ENCODE measurements at regions of chr1 and their contacts with region 1.

Region 1: GRCh38 chr1:40143891-40144575 is 17.2 kb upstream of the RLF start:
- DNase-seq: peak; percentile 53
- H3K4me3 ChIP-seq: no peak overlapping the region
- H3K27ac ChIP-seq: no peak overlapping the region
- H3K4me1 ChIP-seq: no peaks in the 10 kb centered on the region
- H3K27me3 ChIP-seq: peaks cover 41% of the 10 kb centered on the region
- CTCF ChIP-seq: peak; percentile 61 to 77 (median 72)
- EP300 ChIP-seq: no peak
- POLR2A ChIP-seq: no peak

Region 2: DNA sequence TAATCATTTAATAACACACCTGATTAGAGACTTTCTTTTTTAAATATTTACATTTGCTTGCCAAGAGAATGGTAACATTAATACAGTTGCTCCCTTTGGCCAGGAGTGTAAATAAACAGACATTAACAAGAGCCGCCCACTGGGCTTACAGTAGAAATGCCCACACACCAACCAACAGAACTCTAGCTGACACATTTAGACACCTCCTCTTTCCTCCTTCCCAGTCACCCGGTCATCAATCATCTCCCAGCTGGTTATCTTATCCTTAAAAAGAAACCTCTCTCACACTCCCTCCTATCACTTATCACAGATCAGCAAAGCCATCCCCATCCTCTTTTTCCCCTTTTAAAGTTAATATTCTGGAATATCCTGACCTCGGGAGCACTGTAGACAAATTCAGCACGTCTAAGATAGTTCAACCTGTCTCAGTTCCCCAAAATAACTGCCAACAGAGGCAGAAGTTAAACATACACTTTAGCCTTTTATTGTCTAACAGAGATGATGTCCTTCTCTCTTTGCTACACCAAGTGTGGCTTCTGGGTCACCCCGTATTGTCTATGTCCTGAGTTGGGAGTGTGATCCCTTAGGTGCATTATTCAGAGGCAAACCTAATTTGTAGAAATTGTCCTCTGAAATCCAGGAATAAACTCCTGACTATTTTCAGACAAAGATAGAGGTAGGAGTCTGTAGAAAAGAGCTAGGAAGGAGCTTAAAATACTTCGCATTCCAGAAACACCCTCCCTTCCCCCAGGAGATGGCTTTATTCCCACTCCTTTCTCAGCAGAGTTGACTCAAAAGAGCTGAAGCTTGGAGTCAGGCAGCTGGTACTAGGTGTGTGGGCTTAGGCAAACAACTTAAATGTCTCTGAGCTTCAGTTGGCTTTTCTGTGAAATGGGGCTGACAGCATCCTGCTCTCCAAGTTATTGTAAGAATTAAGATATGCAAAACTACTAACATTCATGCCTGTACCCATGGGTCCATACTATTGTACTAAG is 251.1 kb before region 1 on chr1:
- in situ Hi-C with region 1: no loop called
- intact Hi-C with region 1: no loop called
- DNase-seq: no peak
- H3K4me3 ChIP-seq: no peak overlapping the region
- H3K27ac ChIP-seq: no peak overlapping the region
- H3K4me1 ChIP-seq: peaks cover 0 to 12% (median 3%) of the 10 kb centered on the region in 4 donors
- H3K27me3 ChIP-seq: no peaks in the 10 kb centered on the region
- CTCF ChIP-seq: no peak
- EP300 ChIP-seq: no peak
- POLR2A ChIP-seq: no peak

Region 3: DNA sequence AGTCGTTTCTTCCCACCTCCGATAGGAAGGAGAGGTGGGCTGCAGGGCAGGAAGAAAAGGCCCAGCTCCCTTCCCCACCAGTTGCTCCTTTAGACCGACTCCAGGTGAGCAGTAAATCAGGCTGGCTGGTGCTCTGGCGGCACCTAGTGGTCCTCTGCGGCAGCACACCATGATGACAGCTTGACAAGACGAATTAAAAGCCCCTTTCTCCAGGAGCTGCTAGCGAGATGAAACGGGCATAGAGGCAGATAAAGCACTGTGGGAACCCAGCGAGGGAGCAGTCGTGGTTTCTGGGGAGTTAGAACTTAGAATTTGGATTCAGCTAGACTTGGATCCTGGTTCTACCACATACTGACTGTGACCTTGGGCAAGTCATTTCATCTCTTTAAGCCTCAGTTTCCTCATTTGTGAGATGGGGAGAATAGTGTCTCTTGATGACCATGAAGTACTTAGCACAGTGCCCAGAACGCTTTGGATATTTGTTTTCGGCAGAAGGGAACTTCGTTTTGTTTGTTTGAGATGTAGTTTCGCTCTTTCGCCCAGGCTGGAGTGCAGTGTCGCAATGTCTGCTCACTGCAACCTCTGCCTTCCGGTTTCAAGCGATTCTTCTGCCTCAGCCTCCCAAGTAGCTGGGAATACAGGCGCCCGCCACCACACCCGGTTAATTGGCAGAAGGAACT is 194.9 kb after region 1 on chr1:
- in situ Hi-C with region 1: loop called in 3 of 4 experiments (anchors 10 kb)
- intact Hi-C with region 1: loop called (anchors 5 kb)
- DNase-seq: peak; percentile 89
- H3K4me3 ChIP-seq: peak overlapping the region in 1 of 4 donors; percentile 30
- H3K27ac ChIP-seq: no peak overlapping the region
- H3K4me1 ChIP-seq: peaks cover 0 to 8% (median 3%) of the 10 kb centered on the region in 4 donors
- H3K27me3 ChIP-seq: no peaks in the 10 kb centered on the region
- CTCF ChIP-seq: peak; percentile 96 to 99 (median 98)
- EP300 ChIP-seq: no peak
- POLR2A ChIP-seq: no peak

Region 4: GRCh38 chr1:40404670-40405462 is 260.8 kb after region 1 on chr1:
- in situ Hi-C with region 1: loop called in 2 of 4 experiments (anchors 10 to 25 kb)
- intact Hi-C with region 1: loop called (anchors 2 kb)
- DNase-seq: no peak
- H3K4me3 ChIP-seq: no peak overlapping the region
- H3K27ac ChIP-seq: peak overlapping the region in 3 of 4 donors; percentile 10 to 39 (median 11)
- H3K4me1 ChIP-seq: peaks cover 0 to 22% (median 0%) of the 10 kb centered on the region in 4 donors
- H3K27me3 ChIP-seq: no peaks in the 10 kb centered on the region
- CTCF ChIP-seq: peak; percentile 78 to 88 (median 88)
- EP300 ChIP-seq: no peak
- POLR2A ChIP-seq: no peak

Region 5: DNA sequence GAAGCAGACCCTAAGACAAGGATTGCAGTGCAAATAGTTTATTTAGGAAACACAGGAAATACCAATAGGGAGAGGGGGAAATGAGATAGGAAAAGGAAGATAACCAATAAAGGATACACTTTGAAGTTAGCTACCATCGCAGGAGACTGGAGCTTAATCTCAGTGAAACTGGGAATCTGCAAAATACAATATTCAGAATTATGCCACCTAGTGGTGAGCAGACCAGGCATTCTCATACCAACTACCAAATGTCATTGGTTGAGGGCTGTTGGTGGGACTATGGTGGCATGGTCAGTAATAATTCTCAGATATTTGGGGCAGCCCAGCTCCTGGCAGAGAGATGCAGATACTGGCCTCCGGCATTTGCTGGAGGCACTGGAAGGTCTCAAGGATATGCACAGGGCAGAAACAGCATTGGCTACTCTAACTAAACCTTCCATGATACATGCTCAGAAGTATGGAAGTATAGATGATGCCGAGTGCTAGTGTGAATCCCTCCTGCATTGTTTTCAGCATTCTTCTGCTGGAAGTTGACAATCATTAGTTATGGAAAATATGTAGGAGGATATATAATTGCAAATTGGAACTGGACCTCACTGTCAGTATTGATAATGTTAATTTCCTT is 294.5 kb after region 1 on chr1:
- in situ Hi-C with region 1: loop called in 2 of 4 experiments (anchors 10 to 25 kb)
- intact Hi-C with region 1: no loop called
- DNase-seq: no peak
- H3K4me3 ChIP-seq: no peak overlapping the region
- H3K27ac ChIP-seq: no peak overlapping the region
- H3K4me1 ChIP-seq: no peaks in the 10 kb centered on the region
- H3K27me3 ChIP-seq: no peaks in the 10 kb centered on the region
- CTCF ChIP-seq: peak; percentile 43 to 67 (median 50)
- EP300 ChIP-seq: no peak
- POLR2A ChIP-seq: no peak

Region 6: GRCh38 chr1:40449684-40450494 is 305.9 kb after region 1 on chr1 and contains the start of gene ZFP69B:
- in situ Hi-C with region 1: loop called in 1 of 4 experiments (anchors 25 kb)
- intact Hi-C with region 1: no loop called
- DNase-seq: peak; percentile 93
- H3K4me3 ChIP-seq: peak within 1 kb of the TSS; percentile 48 to 75 (median 72)
- H3K27ac ChIP-seq: peak within 1 kb of the TSS; percentile 74 to 86 (median 80)
- H3K4me1 ChIP-seq: peaks cover 4 to 14% (median 10%) of the 10 kb centered on the region in 4 donors
- H3K27me3 ChIP-seq: no peaks in the 10 kb centered on the region
- CTCF ChIP-seq: no peak
- EP300 ChIP-seq: no peak
- POLR2A ChIP-seq: peak; percentile 47
- total RNA-seq, gene ZFP69B: 0.68 to 1.9 TPM in 2 of 4 donors, not detected in the others

Measured in transverse colon (tissue), 4 donors.